ENCODE measurements at regions of chrX and their contacts with region 1.

Region 1: DNA sequence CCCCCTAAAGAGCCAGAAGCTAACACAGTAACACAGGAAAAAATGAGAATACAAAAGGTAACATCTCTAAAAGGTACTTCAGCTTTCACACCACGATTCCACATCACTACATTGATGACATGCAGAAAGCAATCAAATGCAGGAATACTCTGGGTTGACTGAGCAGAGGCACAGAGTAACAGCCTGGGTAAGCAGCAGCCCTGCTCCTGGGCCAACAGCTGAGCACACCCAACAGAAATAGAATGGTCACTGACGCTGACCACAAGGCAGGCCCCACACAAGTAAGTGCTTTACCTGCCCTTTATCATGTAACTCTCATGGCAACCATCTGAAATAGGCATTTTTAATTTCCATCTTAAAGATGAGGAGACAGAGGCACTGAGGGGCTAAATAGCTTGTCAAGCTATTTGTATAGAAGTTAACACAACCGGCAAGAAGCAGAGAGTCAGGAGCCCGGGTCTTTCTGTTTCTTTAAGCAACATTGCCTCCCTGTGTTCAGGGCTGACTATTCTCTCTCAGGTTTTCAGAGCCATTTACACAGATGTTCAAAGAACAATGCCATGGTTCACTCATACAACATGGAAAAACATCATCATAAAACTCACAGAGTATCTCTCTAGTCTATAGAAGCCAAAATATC is 168.9 kb downstream of the ZNF674 start:
- DNase-seq: peak in 3 of 5 donors; percentile 36 to 74 (median 51)
- H3K4me3 ChIP-seq: no peak overlapping the region
- H3K27ac ChIP-seq: no peak overlapping the region
- H3K4me1 ChIP-seq: no peaks in the 10 kb centered on the region
- H3K27me3 ChIP-seq: no peaks in the 10 kb centered on the region
- CTCF ChIP-seq: peak; percentile 32

Region 2: DNA sequence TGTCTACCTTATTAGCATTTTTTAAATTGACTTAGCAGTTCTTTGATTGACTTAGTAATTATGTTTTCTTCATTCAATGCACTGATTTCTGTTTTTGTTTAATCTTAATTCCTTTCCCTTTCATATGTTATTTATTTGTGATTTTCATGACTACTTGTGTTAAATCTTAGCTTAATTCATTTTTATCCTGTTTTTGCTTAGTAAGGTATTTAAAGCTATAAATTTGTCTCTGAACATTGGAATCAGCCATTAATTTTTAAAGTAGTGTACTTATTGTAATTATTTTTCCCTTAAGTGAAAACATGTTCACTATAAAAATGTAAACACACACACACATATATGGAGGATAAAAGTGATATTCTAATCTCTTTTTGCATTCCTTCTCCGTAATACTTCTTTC is 1066.6 kb before region 1 on chrX:
- intact Hi-C with region 1: loop called (anchors 10 kb)
- DNase-seq: no peak
- H3K4me3 ChIP-seq: no peak overlapping the region
- H3K27ac ChIP-seq: no peak overlapping the region
- H3K4me1 ChIP-seq: no peaks in the 10 kb centered on the region
- H3K27me3 ChIP-seq: no peaks in the 10 kb centered on the region
- CTCF ChIP-seq: no peak

Region 3: GRCh38 chrX:46117234-46117633 is 259.1 kb before region 1 on chrX:
- intact Hi-C with region 1: no loop called
- DNase-seq: peak in 1 of 5 donors; percentile 39
- H3K4me3 ChIP-seq: no peak overlapping the region
- H3K27ac ChIP-seq: no peak overlapping the region
- H3K4me1 ChIP-seq: no peaks in the 10 kb centered on the region
- H3K27me3 ChIP-seq: no peaks in the 10 kb centered on the region
- CTCF ChIP-seq: no peak